ENCODE measurements at regions of chr6 and their contacts with region 1.

Region 1: GRCh38 chr6:17167327-17167979 is 65.6 kb downstream of the STMND1 start:
- DNase-seq: peak; percentile 80
- ATAC-seq: peak; percentile 100
- H3K4me3 ChIP-seq: peak overlapping the region; percentile 48
- H3K27ac ChIP-seq: no peak overlapping the region
- H3K4me1 ChIP-seq: no peaks in the 10 kb centered on the region
- H3K27me3 ChIP-seq: no peaks in the 10 kb centered on the region
- CTCF ChIP-seq: peak; percentile 78

Region 2: GRCh38 chr6:16819752-16820151 is 347.7 kb before region 1 on chr6:
- CTCF ChIA-PET with region 1: no interaction called
- POLR2A ChIA-PET with region 1: no interaction called
- intact Hi-C with region 1: no loop called
- DNase-seq: peak; percentile 61
- ATAC-seq: peak; percentile 49; the same call in 1 of the 2 replicates
- H3K4me3 ChIP-seq: no peak overlapping the region
- H3K27ac ChIP-seq: no peak overlapping the region
- H3K4me1 ChIP-seq: 0 out of 2 replicates have a peak, but pooled peaks cover 4% of the 10 kb centered on the region
- H3K27me3 ChIP-seq: no peaks in the 10 kb centered on the region
- CTCF ChIP-seq: peak; percentile 65

Region 3: DNA sequence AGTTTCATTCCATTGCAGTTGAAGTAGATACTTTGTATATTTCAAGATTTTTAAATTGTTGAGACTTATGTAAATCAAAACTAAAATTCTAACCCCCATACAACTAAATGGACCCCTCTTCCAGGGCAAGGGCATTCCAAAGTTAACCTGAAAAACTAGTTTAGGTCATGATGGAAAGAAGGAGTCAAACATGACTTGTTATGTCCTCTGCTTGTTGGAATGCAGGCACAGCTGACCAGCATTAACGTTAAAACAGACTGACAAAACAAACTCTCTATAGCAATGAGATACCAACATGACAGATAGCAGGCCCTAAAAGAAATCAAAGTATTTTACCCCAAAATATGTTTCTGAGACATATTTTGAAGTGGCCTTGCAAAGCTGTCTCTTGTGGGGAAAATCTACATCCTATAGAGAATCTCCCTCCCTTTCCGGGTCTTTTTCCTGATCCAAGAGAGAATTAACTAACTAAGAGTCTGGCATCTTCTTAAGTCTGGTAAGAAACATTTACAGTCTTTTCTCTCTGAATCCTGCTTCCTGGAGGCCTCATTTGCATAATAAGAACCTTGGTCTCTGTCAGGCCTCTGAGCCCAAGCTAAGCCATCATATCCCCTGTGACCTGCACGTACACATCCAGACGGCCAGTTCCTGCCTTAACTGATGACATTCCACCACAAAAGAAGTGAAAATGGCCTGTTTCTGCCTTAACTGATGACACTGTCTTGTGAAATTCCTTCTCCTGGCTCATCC is 281.9 kb before region 1 on chr6:
- CTCF ChIA-PET with region 1: no interaction called
- POLR2A ChIA-PET with region 1: no interaction called
- intact Hi-C with region 1: no loop called
- DNase-seq: no peak
- ATAC-seq: no peak
- H3K4me3 ChIP-seq: no peak overlapping the region
- H3K27ac ChIP-seq: no peak overlapping the region
- H3K4me1 ChIP-seq: no peaks in the 10 kb centered on the region; the same call in 1 of the 2 replicates
- H3K27me3 ChIP-seq: no peaks in the 10 kb centered on the region
- CTCF ChIP-seq: no peak

Region 4: GRCh38 chr6:17354700-17355403 is 187.4 kb after region 1 on chr6:
- CTCF ChIA-PET with region 1: no interaction called
- POLR2A ChIA-PET with region 1: no interaction called
- intact Hi-C with region 1: loop called (anchors 10 kb)
- DNase-seq: peak; percentile 76
- ATAC-seq: peak; percentile 92
- H3K4me3 ChIP-seq: no peak overlapping the region
- H3K27ac ChIP-seq: peak overlapping the region; percentile 40
- H3K4me1 ChIP-seq: peaks cover 22% of the 10 kb centered on the region
- H3K27me3 ChIP-seq: no peaks in the 10 kb centered on the region
- CTCF ChIP-seq: no peak

Measured in PC-3 (cell line).